ENCODE measurements at regions of chr14 and their contacts with region 1.

Region 1: GRCh38 chr14:35883677-35884293 is 57.6 kb downstream of the BRMS1L start:
- ATAC-seq: peak in 3 of 8 experiments; percentile 18 to 57 (median 53)
- H3K4me3 ChIP-seq: no peak overlapping the region
- H3K27ac ChIP-seq: no peak overlapping the region
- H3K4me1 ChIP-seq: no peaks in the 10 kb centered on the region

Region 2: DNA sequence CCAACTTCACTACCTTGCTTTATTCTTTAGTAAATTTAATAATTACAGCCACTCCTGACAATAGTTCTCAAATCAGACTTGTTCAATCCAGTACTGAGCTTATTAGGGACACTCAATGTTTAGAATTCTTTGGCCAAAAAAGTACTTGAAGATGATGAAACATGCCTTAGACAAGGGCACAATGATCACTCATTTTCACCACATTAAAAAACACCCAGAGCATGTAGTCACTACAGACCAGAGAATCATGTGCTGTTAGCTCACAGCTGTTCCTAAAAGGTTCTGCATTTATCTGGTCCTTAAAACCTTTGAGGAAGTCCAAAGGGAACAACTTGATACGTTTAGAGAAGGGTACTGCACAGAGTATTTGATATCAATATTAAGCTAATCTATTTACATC is 251.1 kb before region 1 on chr14:
- in situ Hi-C with region 1: no loop called
- ATAC-seq: no peak
- H3K4me3 ChIP-seq: no peak overlapping the region
- H3K27ac ChIP-seq: no peak overlapping the region
- H3K4me1 ChIP-seq: no peaks in the 10 kb centered on the region

Region 3: DNA sequence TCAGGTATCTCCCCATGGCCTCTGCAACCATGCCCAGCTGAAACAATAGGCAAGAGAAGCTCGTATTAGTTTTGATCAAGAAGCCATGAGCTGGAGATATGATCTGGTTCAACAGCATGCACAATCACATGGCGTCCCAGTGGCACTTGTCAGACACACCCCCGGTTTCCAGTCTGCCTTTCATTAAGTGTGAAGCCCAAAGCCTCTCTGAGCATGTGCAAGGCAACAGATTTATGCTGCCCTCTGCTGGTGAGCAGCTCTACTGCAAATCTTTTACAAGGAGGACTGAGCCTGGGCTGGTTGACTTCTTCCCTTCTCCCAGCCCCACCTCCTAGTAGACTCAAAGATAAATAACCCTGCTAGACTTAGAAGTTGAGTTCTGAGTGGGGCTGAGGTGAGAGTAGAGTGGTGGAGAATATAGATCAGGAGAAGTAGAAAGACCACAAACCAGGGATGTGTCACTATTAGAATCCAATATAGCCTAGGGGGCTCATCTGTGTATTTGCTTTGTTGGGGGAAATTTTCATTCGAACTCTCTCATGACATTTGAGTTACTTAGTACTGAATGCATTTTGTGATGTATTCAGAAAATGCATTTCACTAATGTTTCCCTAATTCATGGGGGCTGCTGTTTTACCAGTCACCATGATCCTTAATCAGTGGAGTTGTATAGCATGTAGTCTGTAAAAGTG is 490.3 kb after region 1 on chr14:
- in situ Hi-C with region 1: no loop called
- ATAC-seq: peak; percentile 67 to 100 (median 83)
- H3K4me3 ChIP-seq: no peak overlapping the region
- H3K27ac ChIP-seq: no peak overlapping the region
- H3K4me1 ChIP-seq: no peaks in the 10 kb centered on the region

Region 4: GRCh38 chr14:36604757-36605505 is 721.1 kb after region 1 on chr14:
- in situ Hi-C with region 1: loop called in 2 of 9 experiments (anchors 25 kb)
- ATAC-seq: peak; percentile 58 to 87 (median 78)
- H3K4me3 ChIP-seq: no peak overlapping the region
- H3K27ac ChIP-seq: no peak overlapping the region
- H3K4me1 ChIP-seq: peaks cover 0 to 6% of the 10 kb centered on the region in 2 donors

Region 5: GRCh38 chr14:37480446-37481290 is 1596.9 kb after region 1 on chr14:
- in situ Hi-C with region 1: no loop called
- ATAC-seq: no peak
- H3K4me3 ChIP-seq: no peak overlapping the region
- H3K27ac ChIP-seq: no peak overlapping the region
- H3K4me1 ChIP-seq: no peaks in the 10 kb centered on the region

Measured in motor neuron (in vitro differentiated cells).